B cell (primary cell): ENCODE measurements at regions of chr11 and their contacts with region 1.

Region 1: DNA sequence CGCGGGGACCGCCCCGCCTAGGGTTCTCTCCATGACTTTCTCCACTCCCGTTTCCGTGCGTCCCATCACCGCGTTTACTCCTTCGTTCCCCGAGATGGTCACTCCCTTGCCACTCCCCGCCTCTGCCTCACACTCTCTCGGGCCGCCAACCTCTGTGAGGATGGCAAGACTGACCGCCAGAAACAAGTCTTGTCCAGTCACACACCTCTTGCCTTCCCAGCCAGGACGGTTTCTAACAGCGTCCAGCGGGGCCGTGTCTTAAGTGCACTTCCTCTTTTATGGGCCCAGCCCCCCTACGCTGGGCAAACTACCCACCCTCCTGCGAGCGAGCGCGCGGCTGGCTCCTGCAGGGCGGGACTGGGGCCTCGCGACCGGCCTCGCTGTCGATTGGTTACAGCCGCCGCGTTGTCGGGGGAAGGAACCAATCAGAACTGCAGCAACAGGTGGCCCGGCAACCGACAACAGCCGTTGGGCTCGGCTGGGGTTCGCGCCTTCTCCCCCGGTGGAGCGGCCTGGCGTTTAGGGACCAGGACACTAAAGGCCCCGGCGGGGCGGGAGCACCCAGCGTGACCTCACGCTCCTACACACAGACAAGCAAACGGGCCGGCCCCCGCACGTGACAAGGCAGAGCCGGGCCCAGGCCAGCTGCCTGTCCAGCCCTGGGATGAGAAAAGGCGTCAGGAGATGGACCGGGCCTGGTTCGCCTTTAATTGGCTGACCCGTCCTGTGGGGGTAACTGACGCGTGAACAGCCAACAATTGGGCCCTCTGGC is 512 bp upstream of the UCP2 start:
- DNase-seq: peak; percentile 97
- ATAC-seq: peak; percentile 65
- H3K4me3 ChIP-seq: peak overlapping the region; percentile 45 to 100 (median 96)
- H3K4me3 Mint-ChIP-seq: peak overlapping the region; percentile 99
- H3K27ac ChIP-seq: peak overlapping the region; percentile 94 to 99
- H3K27ac Mint-ChIP-seq: peak overlapping the region; percentile 99
- H3K4me1 ChIP-seq: peaks cover 40 to 54% of the 10 kb centered on the region in 2 donors
- H3K4me1 Mint-ChIP-seq: peaks cover 57% of the 10 kb centered on the region
- H3K27me3 ChIP-seq: no peaks in the 10 kb centered on the region
- H3K27me3 Mint-ChIP-seq: no peaks in the 10 kb centered on the region
- CTCF ChIP-seq: no peak

Region 2: GRCh38 chr11:73995247-73995646 is 12.1 kb after region 1 on chr11:
- CTCF ChIA-PET with region 1: interaction called, 63 read pairs
- POLR2A ChIA-PET with region 1: interaction called, 77 read pairs
- intact Hi-C with region 1: loop called (anchors 1 kb)
- DNase-seq: peak; percentile 87
- ATAC-seq: peak; percentile 60
- H3K4me3 ChIP-seq: peak overlapping the region in 2 of 5 experiments; percentile 8 to 32
- H3K4me3 Mint-ChIP-seq: peak overlapping the region; percentile 77
- H3K27ac ChIP-seq: peak overlapping the region; percentile 83 to 98
- H3K27ac Mint-ChIP-seq: peak overlapping the region; percentile 100
- H3K4me1 ChIP-seq: peaks cover 91 to 92% of the 10 kb centered on the region in 2 donors
- H3K4me1 Mint-ChIP-seq: peaks cover 85% of the 10 kb centered on the region
- H3K27me3 ChIP-seq: no peaks in the 10 kb centered on the region
- H3K27me3 Mint-ChIP-seq: no peaks in the 10 kb centered on the region
- CTCF ChIP-seq: no peak

Region 3: GRCh38 chr11:74011360-74012073 is 28.4 kb after region 1 on chr11:
- CTCF ChIA-PET with region 1: interaction called, 12 read pairs
- POLR2A ChIA-PET with region 1: interaction called, 56 read pairs
- intact Hi-C with region 1: loop called (anchors 1 kb)
- DNase-seq: peak; percentile 84
- ATAC-seq: peak; percentile 87
- H3K4me3 ChIP-seq: peak overlapping the region in 2 of 5 experiments; percentile 1 to 3
- H3K4me3 Mint-ChIP-seq: peak overlapping the region; percentile 73
- H3K27ac ChIP-seq: peak overlapping the region; percentile 72 to 90
- H3K27ac Mint-ChIP-seq: peak overlapping the region; percentile 97
- H3K4me1 ChIP-seq: peaks cover 63 to 67% of the 10 kb centered on the region in 2 donors
- H3K4me1 Mint-ChIP-seq: peaks cover 75% of the 10 kb centered on the region
- H3K27me3 ChIP-seq: no peaks in the 10 kb centered on the region
- H3K27me3 Mint-ChIP-seq: no peaks in the 10 kb centered on the region
- CTCF ChIP-seq: no peak

Region 4: DNA sequence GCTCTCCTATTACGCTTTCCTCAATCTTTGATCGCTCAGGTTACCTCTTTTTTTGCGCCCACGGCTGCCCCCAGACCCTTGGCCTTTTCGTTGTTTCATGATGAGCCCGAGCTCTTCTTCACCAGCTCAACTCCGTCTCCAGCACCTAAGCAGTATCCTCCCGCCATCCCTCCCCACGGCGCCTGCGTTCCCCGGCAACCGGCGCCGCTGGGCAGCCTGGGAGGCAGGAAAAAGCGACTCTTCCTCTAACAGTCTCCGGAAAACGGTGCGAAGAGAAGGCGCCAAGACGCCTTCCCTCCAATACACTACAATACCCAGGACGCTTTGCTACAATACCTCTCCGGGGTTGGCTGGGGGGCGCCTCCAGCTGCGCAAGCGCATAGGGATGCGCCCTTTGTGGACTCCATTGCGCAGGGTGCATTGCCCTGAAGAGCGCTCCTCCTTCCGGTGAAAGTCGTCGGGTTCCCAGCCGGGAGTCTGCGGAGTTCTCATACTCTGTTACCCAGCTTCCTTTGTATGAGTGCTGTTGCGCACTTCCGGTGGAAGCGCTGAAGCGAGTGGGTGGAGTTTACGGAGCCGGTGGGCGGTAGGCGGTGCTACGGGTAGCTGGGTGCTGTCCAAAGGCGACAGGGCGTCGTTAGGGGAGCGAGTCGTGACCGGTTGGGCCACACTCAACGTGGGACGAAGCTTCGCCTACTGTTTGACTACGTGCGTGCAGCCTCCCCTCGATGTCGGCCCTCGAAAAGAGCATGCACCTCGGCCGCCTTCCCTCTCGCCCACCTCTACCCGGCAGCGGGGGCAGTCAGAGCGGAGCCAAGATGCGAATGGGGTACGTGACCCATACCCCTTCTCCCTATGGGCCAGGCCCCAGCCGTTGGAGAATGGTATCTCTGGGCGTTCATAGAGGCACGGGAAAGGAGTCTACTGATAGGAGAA is 187.8 kb after region 1 on chr11 and contains the starts of genes C2CD3 and PPME1:
- CTCF ChIA-PET with region 1: interaction called, 5 read pairs
- POLR2A ChIA-PET with region 1: interaction called, 8 read pairs
- intact Hi-C with region 1: loop called (anchors 2 kb)
- DNase-seq: peak; percentile 99
- ATAC-seq: peak; percentile 94
- H3K4me3 ChIP-seq: peak within 1 kb of the TSS; percentile 82 to 95 (median 85)
- H3K4me3 Mint-ChIP-seq: no peak within 1 kb of the TSS
- H3K27ac ChIP-seq: peak within 1 kb of the TSS; percentile 73 to 80
- H3K27ac Mint-ChIP-seq: no peak within 1 kb of the TSS
- H3K4me1 ChIP-seq: peaks cover 22 to 26% of the 10 kb centered on the region in 2 donors
- H3K4me1 Mint-ChIP-seq: peaks cover 6% of the 10 kb centered on the region
- H3K27me3 ChIP-seq: no peaks in the 10 kb centered on the region
- H3K27me3 Mint-ChIP-seq: no peaks in the 10 kb centered on the region
- CTCF ChIP-seq: peak; percentile 11
- total RNA-seq, gene C2CD3: 63.9 and 69.0 TPM in 2 replicates
- total RNA-seq, gene PPME1: 18.7 and 23.6 TPM in 2 replicates